Mammary epithelial cell (primary cell): ENCODE measurements at regions of chr2 and their contacts with region 1.

Region 1: DNA sequence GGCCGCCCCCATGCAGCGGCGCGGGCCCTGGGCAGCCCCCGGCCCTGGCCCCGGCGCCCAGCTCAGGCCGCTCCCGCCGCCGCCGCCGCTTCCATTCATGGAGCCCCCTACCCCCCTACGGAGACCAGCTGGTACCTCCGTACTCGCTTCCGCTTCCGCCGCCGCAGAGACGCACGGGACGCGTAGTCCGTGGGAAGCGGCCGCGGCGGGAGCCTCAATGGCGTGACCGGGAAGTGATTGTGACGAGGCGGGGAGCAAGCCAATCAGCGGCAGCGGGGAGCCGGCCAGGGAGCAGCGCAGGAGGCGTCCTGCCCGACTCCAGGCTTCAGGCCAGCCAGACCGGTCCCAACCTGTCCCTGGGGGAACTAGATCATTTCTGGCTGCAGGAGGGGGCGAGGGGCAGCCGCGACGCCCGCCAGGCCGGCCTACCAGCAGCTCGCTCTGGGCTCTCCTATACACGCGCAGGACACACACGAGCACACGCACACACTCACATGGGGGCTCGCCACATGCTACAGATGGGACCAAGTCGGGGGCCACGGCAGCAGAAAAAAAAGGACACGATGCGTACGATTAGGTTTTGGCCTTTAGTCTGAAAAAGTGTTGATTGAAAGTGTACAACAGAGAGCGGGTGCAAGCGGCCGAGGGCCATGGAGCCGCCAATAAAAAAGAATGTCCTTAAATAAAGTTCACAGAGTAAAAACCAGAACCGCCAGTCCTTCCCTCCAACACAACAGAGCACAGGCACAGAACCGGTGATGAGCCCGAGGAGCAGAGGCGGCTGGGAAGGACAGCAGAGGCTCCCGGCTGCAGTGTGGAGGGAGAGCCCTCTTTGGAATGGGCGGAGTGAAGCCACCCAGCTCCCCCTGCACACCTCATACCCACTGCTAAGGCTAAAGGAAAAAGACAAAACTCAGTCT is at the start of gene ZNF513:
- DNase-seq: peak; percentile 96
- H3K4me3 ChIP-seq: peak within 1 kb of the TSS; percentile 66 to 87 (median 75)
- H3K27ac ChIP-seq: peak within 1 kb of the TSS; percentile 86
- H3K4me1 ChIP-seq: peaks cover 33% of the 10 kb centered on the region
- H3K27me3 ChIP-seq: no peaks in the 10 kb centered on the region
- CTCF ChIP-seq: no peak
- total RNA-seq, gene ZNF513: 10.2 to 14.9 TPM

Region 2: GRCh38 chr2:27370026-27370815 is 10.7 kb before region 1 on chr2 and contains the starts of genes EIF2B4 and SNX17:
- CTCF ChIA-PET with region 1: no interaction called
- dilution Hi-C with region 1: no loop called
- in situ Hi-C with region 1: no loop called
- intact Hi-C with region 1: loop called (anchors 1 kb)
- DNase-seq: peak; percentile 99
- H3K4me3 ChIP-seq: peak within 1 kb of the TSS; percentile 88 to 96 (median 94)
- H3K27ac ChIP-seq: peak within 1 kb of the TSS; percentile 67
- H3K4me1 ChIP-seq: peaks cover 18% of the 10 kb centered on the region
- H3K27me3 ChIP-seq: no peaks in the 10 kb centered on the region
- CTCF ChIP-seq: peak; percentile 55 to 97
- total RNA-seq, gene EIF2B4: 19.8 to 42.3 TPM
- total RNA-seq, gene SNX17: 86.0 to 87.5 TPM

Region 3: DNA sequence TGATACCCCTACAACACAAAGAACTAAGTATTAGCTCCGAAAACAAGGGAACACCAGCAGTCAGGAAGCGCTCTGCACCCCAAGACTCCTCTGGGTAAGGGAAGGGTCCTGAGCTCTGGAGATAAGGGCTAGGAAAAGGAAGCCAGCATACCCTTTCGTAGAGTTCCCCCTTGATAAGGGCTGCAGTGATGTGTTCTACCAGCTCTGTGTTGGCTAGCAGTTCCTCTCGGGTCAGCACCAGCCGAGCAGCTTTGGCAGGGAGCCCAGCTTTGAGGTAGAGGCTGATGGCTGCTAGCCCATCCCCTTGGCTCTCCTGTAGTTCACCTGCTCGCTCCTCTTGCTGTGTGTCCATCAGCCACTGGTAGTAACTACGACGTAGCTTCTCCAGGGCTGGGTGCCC is 80.2 kb after region 1 on chr2:
- CTCF ChIA-PET with region 1: no interaction called
- dilution Hi-C with region 1: loop called (anchors 5 kb)
- in situ Hi-C with region 1: no loop called
- intact Hi-C with region 1: no loop called
- DNase-seq: no peak
- H3K4me3 ChIP-seq: no peak overlapping the region
- H3K27ac ChIP-seq: no peak overlapping the region
- H3K4me1 ChIP-seq: no peaks in the 10 kb centered on the region
- H3K27me3 ChIP-seq: no peaks in the 10 kb centered on the region
- CTCF ChIP-seq: no peak

Region 4: DNA sequence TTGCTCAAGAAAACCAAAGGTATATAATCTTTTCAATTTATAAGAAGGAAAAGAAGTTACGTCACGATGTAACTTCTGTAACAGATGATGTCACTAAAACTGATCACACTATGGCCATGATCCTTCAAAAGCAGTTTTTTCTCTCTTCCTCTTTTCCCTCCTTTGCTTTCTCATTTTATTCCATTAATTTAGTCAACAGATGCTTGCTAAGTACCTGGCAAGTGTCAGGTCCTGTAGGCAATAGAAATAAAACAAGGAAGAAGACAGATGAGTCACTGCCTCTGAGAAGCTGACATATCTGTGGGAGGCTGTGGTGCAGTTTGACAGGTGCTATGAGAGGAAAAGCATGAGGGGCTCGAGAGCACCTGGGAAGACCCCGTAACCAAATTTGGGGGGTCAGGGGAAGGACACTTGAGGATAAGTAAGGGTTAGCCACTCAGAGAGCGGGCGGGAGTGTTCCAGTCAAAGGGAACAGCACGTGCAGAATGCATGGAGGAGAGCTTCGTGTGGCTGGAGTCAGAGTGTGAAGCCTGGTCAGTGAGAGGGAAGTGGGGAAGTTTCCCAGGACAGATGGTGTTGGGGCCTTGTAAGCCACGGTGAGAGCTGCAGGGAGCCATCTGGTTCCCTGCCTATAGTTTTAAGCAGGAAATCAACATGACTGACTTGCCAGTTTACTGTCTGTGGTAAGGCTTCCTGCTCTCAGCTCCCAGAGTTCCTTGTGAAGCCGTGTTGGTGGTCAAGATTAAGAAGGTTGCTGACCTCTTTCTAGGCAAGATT is 812.9 kb after region 1 on chr2:
- CTCF ChIA-PET with region 1: no interaction called
- dilution Hi-C with region 1: no loop called
- in situ Hi-C with region 1: no loop called
- intact Hi-C with region 1: no loop called
- DNase-seq: peak; percentile 21
- H3K4me3 ChIP-seq: no peak overlapping the region
- H3K27ac ChIP-seq: no peak overlapping the region
- H3K4me1 ChIP-seq: no peaks in the 10 kb centered on the region
- H3K27me3 ChIP-seq: no peaks in the 10 kb centered on the region
- CTCF ChIP-seq: no peak